ENCODE measurements at regions of chr4 and their contacts with region 1.

Region 1: GRCh38 chr4:78293821-78294301 is 236.7 kb downstream of the FRAS1 start:
- DNase-seq: no peak
- ATAC-seq: peak in 4 of 8 donors; percentile 38 to 67 (median 46)
- H3K4me3 ChIP-seq: no peak overlapping the region
- H3K27ac ChIP-seq: no peak overlapping the region
- H3K4me1 ChIP-seq: peaks cover 0 to 24% (median 7%) of the 10 kb centered on the region in 9 donors
- H3K27me3 ChIP-seq: no peaks in the 10 kb centered on the region
- CTCF ChIP-seq: peak in 2 of 9 donors; percentile 27 to 28

Region 2: GRCh38 chr4:78061939-78062570 is 231.8 kb before region 1 on chr4:
- intact Hi-C with region 1: loop called in 1 of 10 experiments (anchors 10 kb)
- DNase-seq: no peak
- ATAC-seq: no peak
- H3K4me3 ChIP-seq: no peak overlapping the region
- H3K27ac ChIP-seq: no peak overlapping the region
- H3K4me1 ChIP-seq: peaks cover 0 to 25% (median 8%) of the 10 kb centered on the region in 9 donors
- H3K27me3 ChIP-seq: peaks cover 0 to 71% (median 0%) of the 10 kb centered on the region in 7 donors
- CTCF ChIP-seq: no peak